ENCODE measurements at regions of chr10 and their contacts with region 1.

Region 1: GRCh38 chr10:8331883-8332729 is 277.6 kb downstream of the GATA3 start:
- DNase-seq: peak; percentile 82 to 98 (median 88)
- ATAC-seq: peak; percentile 93
- H3K4me3 ChIP-seq: peak overlapping the region; percentile 53 to 63
- H3K4me3 Mint-ChIP-seq: peak overlapping the region; percentile 76
- H3K27ac ChIP-seq: peak overlapping the region; percentile 85 to 92
- H3K27ac Mint-ChIP-seq: peak overlapping the region; percentile 85
- H3K4me1 ChIP-seq: peaks cover 23% of the 10 kb centered on the region
- H3K4me1 Mint-ChIP-seq: peaks cover 35% of the 10 kb centered on the region
- H3K27me3 ChIP-seq: no peaks in the 10 kb centered on the region
- H3K27me3 Mint-ChIP-seq: no peaks in the 10 kb centered on the region
- CTCF ChIP-seq: no peak

Region 2: DNA sequence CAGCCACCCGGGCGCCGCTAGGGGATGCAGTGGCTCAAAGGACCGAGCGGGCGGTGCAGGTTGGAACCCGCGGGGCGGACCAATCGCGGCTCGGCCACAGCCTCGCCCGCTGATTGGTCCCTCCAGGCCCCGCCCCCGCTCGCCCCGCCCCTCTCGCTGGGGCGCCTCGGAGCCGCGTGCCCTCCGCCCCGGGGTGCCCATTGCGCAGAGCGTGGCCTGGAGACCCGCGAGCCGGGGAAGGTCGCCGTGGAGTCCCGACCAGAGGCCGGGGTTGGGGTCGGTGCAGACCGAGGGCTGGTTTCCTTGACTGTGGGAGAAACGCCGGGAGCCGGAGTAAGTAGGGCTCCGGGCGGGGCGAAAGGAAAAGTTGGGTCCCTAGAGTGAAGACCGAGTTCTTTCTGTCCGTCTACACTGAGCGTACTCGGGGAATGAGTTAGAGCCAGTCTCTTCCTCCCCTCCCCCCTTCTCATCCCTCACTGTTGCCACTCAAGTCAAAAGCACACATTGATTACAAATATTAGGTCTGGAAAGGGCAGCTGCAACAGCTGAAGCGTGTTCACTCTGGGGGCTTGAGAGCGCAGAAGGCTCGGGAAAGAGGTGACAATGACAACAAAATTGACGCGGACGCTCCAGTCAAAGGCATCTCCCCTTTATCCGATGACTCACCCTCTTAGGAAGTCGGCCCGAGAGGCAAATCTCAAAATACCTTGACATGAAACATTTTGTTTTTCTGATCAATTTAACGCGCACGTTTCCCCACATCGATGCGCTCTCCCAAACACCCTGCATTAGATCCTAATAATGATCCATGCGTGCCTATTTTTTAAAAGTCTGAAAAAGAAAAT is 278.4 kb before region 1 on chr10:
- CTCF ChIA-PET with region 1: interaction called, 7 read pairs
- POLR2A ChIA-PET with region 1: interaction called, 38 read pairs
- intact Hi-C with region 1: loop called (anchors 1 kb)
- DNase-seq: peak; percentile 85 to 97 (median 95)
- ATAC-seq: peak; percentile 60
- H3K4me3 ChIP-seq: peak overlapping the region; percentile 87 to 90
- H3K4me3 Mint-ChIP-seq: peak overlapping the region; percentile 83
- H3K27ac ChIP-seq: peak overlapping the region; percentile 56 to 65
- H3K27ac Mint-ChIP-seq: peak overlapping the region; percentile 92
- H3K4me1 ChIP-seq: peaks cover 65% of the 10 kb centered on the region
- H3K4me1 Mint-ChIP-seq: peaks cover 49% of the 10 kb centered on the region
- H3K27me3 ChIP-seq: peaks cover 35 to 39% of the 10 kb centered on the region in 2 experiments
- H3K27me3 Mint-ChIP-seq: peaks cover 23% of the 10 kb centered on the region
- CTCF ChIP-seq: no peak

Region 3: DNA sequence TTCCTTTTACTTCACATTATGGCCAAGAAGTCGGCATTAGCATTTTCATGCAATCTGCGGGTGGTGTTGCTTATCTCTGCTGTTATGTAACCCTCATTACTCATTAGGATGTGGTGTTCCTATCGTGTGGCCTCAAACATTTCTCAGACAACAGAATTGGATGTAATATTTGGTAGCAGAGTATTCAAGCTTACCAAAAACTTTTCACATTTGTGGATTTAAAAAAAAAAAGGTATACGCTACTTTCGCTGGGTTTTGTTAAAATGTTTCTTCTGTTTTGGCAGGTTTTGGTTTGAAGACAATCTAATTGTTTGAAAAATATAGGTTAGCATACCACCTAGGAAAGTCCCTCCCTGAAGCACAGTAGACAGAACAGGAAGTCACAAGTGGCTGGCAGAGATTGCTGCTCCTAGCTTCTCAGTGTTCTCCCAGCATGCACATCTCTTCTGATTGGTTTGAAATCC is 148.8 kb before region 1 on chr10:
- CTCF ChIA-PET with region 1: no interaction called
- POLR2A ChIA-PET with region 1: interaction called, 3 read pairs
- intact Hi-C with region 1: loop called in 1 of 2 experiments (anchors 5 kb)
- DNase-seq: peak in 8 of 9 experiments; percentile 2 to 88 (median 41)
- ATAC-seq: peak; percentile 89
- H3K4me3 ChIP-seq: no peak overlapping the region
- H3K4me3 Mint-ChIP-seq: peak overlapping the region; percentile 11
- H3K27ac ChIP-seq: peak overlapping the region in 1 of 2 experiments; percentile 55
- H3K27ac Mint-ChIP-seq: peak overlapping the region; percentile 89
- H3K4me1 ChIP-seq: peaks cover 16% of the 10 kb centered on the region
- H3K4me1 Mint-ChIP-seq: peaks cover 20% of the 10 kb centered on the region
- H3K27me3 ChIP-seq: no peaks in the 10 kb centered on the region
- H3K27me3 Mint-ChIP-seq: peaks cover 3% of the 10 kb centered on the region
- CTCF ChIP-seq: no peak

Region 4: DNA sequence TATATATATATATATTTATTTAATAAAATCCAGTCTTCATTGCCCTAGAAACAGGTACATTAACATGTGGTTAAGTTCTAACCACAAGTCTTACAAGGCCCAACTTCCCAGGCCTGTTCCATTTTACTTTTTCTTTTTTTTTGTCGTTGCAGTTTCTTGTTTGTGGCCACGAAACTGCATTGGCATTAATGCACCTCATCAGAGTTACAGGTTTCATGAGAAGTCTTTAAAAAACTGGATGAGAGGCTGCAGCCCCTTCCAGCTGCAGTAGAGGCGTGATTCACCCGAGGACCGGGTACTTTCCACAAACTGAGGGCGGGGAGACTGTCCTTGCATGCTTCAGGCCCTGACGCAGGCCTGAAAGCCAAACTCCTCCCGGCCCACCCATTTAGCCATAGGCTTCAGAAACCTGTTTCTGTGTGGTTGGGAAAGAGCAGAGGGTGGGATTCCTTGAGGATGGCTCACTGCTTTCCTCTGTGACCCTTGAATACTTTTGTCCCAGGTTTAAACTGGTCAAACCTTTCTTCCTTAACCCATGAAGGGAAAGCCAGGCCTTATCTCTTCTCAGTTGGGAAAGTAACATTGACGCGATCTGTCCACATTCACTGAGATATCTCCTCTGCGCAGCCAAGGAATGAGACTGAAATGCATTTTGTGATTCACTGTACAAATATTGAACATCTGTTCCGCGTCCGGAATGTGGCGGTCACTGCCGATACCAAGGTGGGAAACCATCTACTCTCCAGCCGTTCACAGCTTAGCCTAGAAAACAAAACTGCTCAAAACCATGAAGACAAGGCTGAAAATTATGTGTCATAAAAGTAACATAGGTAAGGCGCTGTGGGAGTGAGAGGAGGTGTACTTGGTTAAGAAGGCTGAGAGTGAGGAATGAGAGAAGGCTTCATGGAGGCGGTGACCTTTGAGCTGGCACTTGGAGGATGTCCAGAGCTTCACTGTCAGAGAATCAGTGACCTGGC is 34.1 kb after region 1 on chr10:
- CTCF ChIA-PET with region 1: no interaction called
- POLR2A ChIA-PET with region 1: no interaction called
- intact Hi-C with region 1: loop called (anchors 5 kb)
- DNase-seq: peak in 8 of 9 experiments; percentile 9 to 80 (median 36)
- ATAC-seq: peak; percentile 66
- H3K4me3 ChIP-seq: no peak overlapping the region
- H3K4me3 Mint-ChIP-seq: no peak overlapping the region
- H3K27ac ChIP-seq: no peak overlapping the region
- H3K27ac Mint-ChIP-seq: no peak overlapping the region
- H3K4me1 ChIP-seq: peaks cover 3% of the 10 kb centered on the region
- H3K4me1 Mint-ChIP-seq: peaks cover 43% of the 10 kb centered on the region
- H3K27me3 ChIP-seq: no peaks in the 10 kb centered on the region
- H3K27me3 Mint-ChIP-seq: no peaks in the 10 kb centered on the region
- CTCF ChIP-seq: no peak

Region 5: DNA sequence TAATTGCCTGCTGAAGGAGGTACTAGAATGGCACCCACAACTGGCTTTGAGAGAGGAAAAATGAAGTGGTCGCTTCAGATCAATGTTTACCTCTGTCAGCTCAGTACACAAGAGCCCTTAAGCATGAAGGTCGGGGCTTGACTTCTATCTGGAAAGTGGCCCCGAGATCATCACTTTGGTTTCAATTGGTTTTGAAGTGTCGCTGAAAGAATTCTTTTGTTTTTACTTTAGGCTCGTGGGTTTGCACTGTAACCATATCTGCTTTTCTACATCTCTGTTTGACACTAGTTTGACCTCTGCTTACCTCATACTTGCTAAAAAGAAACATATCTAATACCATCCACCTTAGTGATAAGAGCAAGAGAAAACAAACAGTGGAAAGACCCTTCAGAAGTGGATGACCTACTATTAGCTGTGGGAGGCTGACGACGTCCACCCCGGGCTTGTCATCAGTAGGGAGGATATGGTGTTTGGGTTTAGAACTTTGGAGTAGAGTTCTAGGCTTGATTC is 84.1 kb after region 1 on chr10:
- CTCF ChIA-PET with region 1: no interaction called
- POLR2A ChIA-PET with region 1: no interaction called
- intact Hi-C with region 1: loop called (anchors 1 to 5 kb)
- DNase-seq: peak in 7 of 9 experiments; percentile 18 to 88 (median 44)
- ATAC-seq: peak; percentile 84
- H3K4me3 ChIP-seq: no peak overlapping the region
- H3K4me3 Mint-ChIP-seq: no peak overlapping the region
- H3K27ac ChIP-seq: peak overlapping the region; percentile 50 to 78
- H3K27ac Mint-ChIP-seq: peak overlapping the region; percentile 96
- H3K4me1 ChIP-seq: peaks cover 19% of the 10 kb centered on the region
- H3K4me1 Mint-ChIP-seq: peaks cover 30% of the 10 kb centered on the region
- H3K27me3 ChIP-seq: no peaks in the 10 kb centered on the region
- H3K27me3 Mint-ChIP-seq: no peaks in the 10 kb centered on the region
- CTCF ChIP-seq: no peak

Region 6: DNA sequence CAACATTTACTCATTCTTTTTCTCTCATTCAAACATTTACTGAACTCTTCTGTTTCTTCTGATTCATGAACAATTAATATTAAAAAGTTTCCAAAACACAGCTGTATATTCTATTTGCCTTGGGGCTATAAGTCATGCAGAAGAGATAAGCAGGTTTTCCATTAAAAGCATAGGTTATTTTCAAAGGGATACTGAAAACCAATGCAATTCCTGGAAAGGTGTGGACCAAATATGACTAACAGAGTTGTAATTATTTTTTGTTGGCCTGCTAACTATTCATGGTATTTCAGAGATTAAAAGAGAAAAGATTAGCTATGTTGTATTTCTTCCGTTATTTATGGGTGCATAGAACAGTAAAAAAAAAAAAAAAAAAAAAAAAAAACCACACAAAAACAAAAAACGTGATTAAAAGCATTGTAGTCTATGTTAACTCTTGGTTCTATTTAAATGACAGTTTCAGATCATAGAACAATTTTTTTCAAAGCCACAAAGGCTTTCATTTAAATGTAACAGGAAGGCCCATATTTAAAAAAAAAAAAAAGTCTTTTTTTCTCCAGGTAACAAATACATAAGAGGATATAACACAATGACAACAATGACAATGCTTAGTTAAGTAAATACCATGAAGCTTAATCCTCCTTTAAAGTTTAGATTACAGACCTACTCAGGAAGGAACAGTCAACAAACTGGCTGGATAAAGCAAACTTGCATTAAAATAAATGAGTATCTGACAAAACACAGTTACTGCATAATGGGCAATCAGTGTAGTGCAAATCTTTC is 765.3 kb after region 1 on chr10:
- CTCF ChIA-PET with region 1: no interaction called
- POLR2A ChIA-PET with region 1: no interaction called
- intact Hi-C with region 1: loop called (anchors 1 to 5 kb)
- DNase-seq: peak in 2 of 9 experiments; percentile 32 to 68
- ATAC-seq: peak; percentile 69
- H3K4me3 ChIP-seq: no peak overlapping the region
- H3K4me3 Mint-ChIP-seq: no peak overlapping the region
- H3K27ac ChIP-seq: peak overlapping the region in 1 of 2 experiments; percentile 37
- H3K27ac Mint-ChIP-seq: peak overlapping the region; percentile 33
- H3K4me1 ChIP-seq: peaks cover 28% of the 10 kb centered on the region
- H3K4me1 Mint-ChIP-seq: peaks cover 33% of the 10 kb centered on the region
- H3K27me3 ChIP-seq: no peaks in the 10 kb centered on the region
- H3K27me3 Mint-ChIP-seq: no peaks in the 10 kb centered on the region
- CTCF ChIP-seq: no peak

Measured in CD8-positive, alpha-beta T cell (primary cell).